Calu3 (cell line): ENCODE measurements at regions of chr18 and their contacts with region 1.

Region 1: DNA sequence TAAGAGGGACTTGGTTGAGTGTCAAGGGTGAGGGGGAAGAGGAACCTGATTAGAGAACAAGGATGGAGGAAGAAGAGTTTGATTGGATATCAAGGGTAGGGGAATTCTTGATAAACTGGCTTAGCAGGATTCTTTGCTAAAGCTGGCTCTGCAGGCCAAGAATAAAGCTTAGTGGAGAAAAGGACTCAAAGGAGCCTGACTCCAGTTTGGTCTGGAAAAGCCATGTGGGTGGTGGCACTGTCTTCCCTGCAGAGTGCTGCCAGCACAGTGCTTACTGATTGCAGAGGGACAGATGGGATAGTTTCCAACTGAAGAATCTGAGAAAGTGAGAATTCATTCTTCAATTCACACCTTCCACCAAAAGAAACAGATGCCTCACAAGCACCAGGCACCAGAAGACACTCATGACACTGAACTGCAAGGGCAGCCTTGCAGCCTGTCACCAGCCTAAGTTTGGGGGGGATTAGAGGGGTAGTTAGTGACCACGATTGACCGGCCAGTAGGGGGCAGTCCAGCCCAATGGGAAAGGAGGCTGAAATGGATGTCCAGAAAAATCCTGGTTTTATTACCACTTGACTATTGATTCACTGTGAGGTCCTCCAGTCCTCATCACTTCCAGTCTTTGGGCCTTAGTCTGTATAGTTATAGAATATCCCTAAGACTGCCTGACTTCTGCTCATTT is 334.5 kb downstream of the SMAD2 start:
- DNase-seq: peak; percentile 6
- H3K4me3 Mint-ChIP-seq: no peak overlapping the region
- H3K27ac Mint-ChIP-seq: no peak overlapping the region
- H3K4me1 Mint-ChIP-seq: no peaks in the 10 kb centered on the region
- H3K27me3 Mint-ChIP-seq: peaks cover 59% of the 10 kb centered on the region
- CTCF ChIP-seq: no peak

Region 2: DNA sequence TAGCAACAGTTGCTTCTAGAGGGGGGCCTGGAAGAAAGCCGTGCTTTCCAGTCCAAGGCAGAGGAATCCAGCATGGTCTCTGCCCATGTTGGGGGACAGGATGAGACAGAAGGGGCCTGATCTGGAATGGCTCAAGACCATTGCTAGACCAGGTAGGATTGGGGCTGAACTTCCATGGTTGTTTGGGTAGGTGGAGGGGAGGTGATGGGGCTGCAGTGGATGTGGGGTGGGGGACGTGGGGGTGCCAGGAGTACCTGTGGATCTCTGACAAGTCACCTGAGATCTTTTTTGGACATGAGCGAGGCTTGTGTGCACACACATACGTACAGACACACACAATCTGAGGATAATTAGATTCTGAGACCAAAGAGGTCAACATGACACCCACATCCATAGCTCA is 115.8 kb before region 1 on chr18:
- CTCF ChIA-PET with region 1: interaction called, 11 read pairs
- intact Hi-C with region 1: no loop called
- DNase-seq: no peak
- H3K4me3 Mint-ChIP-seq: no peak overlapping the region
- H3K27ac Mint-ChIP-seq: no peak overlapping the region
- H3K4me1 Mint-ChIP-seq: no peaks in the 10 kb centered on the region
- H3K27me3 Mint-ChIP-seq: peaks cover 90% of the 10 kb centered on the region
- CTCF ChIP-seq: no peak

Region 3: DNA sequence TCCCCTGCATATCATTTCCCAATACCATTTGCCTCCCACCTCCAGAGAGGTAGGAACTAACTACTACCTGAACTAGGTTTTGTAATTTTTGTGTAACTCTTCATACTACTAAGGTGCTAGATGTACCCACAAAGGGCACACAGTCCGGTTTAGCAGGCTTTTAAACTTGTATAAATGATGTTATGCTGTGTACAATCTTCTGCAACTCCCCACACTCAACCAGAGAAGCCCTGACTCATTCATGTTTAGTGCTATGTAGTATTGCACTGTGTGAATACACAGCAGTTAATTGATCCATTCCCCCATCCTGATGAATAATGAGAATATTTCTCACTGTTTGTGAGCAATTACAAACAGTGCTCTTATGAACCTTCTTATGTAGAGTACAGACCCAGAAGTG is 48.9 kb after region 1 on chr18:
- CTCF ChIA-PET with region 1: no interaction called
- intact Hi-C with region 1: no loop called
- DNase-seq: no peak
- H3K4me3 Mint-ChIP-seq: no peak overlapping the region
- H3K27ac Mint-ChIP-seq: no peak overlapping the region
- H3K4me1 Mint-ChIP-seq: no peaks in the 10 kb centered on the region
- H3K27me3 Mint-ChIP-seq: peaks cover 40% of the 10 kb centered on the region
- CTCF ChIP-seq: no peak